ENCODE measurements at regions of chr7 and their contacts with region 1.

Region 1: DNA sequence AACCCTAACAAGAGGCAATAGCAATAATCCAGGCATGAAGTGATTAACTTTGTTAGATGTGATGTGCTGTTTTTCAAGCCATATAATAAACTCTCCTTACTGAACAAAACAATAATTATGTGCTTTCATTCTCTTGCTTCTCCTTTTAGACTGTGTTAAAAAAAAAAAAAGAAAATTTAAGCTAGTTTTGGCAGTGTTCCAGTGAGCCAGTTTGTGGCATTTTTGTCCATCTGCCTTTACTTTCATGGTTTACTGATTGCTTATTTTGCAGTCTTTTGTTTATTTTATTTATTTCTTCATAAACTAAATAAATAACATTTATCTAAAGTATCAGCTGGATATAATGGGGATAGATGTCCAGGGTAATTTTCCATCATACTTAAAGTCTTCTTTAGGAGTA is 625.3 kb downstream of the CNTNAP2 start:
- DNase-seq: no peak
- H3K4me3 ChIP-seq: no peak overlapping the region
- H3K27ac ChIP-seq: no peak overlapping the region
- H3K4me1 ChIP-seq: no peaks in the 10 kb centered on the region
- H3K27me3 ChIP-seq: no peaks in the 10 kb centered on the region
- CTCF ChIP-seq: no peak
- POLR2A ChIP-seq: no peak

Region 2: DNA sequence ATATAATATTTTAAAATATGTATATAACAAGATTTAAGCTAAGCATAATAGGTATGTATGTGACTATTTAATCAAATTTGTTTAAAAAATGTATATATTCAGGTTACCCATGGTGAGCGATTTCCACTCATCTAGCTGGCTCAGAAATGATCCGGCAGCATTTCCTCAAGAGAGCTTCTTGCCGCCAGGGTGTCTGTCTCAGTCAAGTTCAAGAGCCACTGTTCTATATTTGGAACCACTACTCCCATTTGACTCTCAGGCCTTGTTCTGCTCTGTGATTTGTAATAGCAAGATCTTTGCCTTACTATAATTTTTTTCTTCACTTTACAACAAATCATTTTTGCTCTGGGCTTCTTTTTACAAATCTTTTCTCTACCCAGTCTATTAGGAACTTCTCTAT is 674.0 kb before region 1 on chr7:
- intact Hi-C with region 1: loop called (anchors 5 kb)
- DNase-seq: no peak
- H3K4me3 ChIP-seq: no peak overlapping the region
- H3K27ac ChIP-seq: no peak overlapping the region
- H3K4me1 ChIP-seq: no peaks in the 10 kb centered on the region
- H3K27me3 ChIP-seq: no peaks in the 10 kb centered on the region
- CTCF ChIP-seq: no peak
- POLR2A ChIP-seq: no peak

Region 3: GRCh38 chr7:146414373-146414772 is 327.5 kb before region 1 on chr7:
- intact Hi-C with region 1: no loop called
- DNase-seq: no peak
- H3K4me3 ChIP-seq: no peak overlapping the region
- H3K27ac ChIP-seq: no peak overlapping the region
- H3K4me1 ChIP-seq: no peaks in the 10 kb centered on the region
- H3K27me3 ChIP-seq: peaks cover 0 to 5% of the 10 kb centered on the region in 2 donors
- CTCF ChIP-seq: no peak
- POLR2A ChIP-seq: no peak

Region 4: GRCh38 chr7:146690099-146690498 is 51.8 kb before region 1 on chr7:
- intact Hi-C with region 1: no loop called
- DNase-seq: no peak
- H3K4me3 ChIP-seq: no peak overlapping the region
- H3K27ac ChIP-seq: no peak overlapping the region
- H3K4me1 ChIP-seq: no peaks in the 10 kb centered on the region
- H3K27me3 ChIP-seq: no peaks in the 10 kb centered on the region
- CTCF ChIP-seq: no peak
- POLR2A ChIP-seq: no peak

Region 5: DNA sequence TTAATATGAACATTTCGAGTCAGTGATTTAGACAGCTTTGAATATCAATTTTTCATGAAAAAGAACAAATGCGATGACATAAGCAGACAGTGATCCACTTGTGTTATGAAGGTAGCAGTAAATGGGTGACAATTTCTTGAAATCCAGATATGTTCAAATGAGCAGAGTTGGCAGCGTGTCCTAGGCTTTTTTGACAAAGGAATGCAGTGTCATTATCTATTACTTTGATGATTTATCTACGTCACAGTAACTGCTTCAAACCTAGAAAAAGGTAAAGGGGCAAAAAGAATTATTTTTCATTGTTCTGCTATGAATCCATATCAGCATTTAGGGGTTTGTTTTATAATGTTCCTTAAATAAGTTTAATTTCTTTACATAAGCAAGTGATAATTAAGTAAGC is 15.1 kb after region 1 on chr7:
- intact Hi-C with region 1: no loop called
- DNase-seq: no peak
- H3K4me3 ChIP-seq: no peak overlapping the region
- H3K27ac ChIP-seq: no peak overlapping the region
- H3K4me1 ChIP-seq: no peaks in the 10 kb centered on the region
- H3K27me3 ChIP-seq: no peaks in the 10 kb centered on the region
- CTCF ChIP-seq: no peak
- POLR2A ChIP-seq: no peak